ENCODE measurements at regions of chr9 and their contacts with region 1.

Region 1: GRCh38 chr9:33446946-33447798 is at the start of gene AQP3:
- DNase-seq: peak; percentile 76 to 84 (median 76)
- H3K4me3 ChIP-seq: peak within 1 kb of the TSS; percentile 68 to 73
- H3K4me3 Mint-ChIP-seq: peak within 1 kb of the TSS; percentile 92 to 98 (median 94)
- H3K27ac ChIP-seq: peak within 1 kb of the TSS; percentile 75
- H3K27ac Mint-ChIP-seq: peak within 1 kb of the TSS; percentile 94 to 98 (median 96)
- H3K4me1 ChIP-seq: peaks cover 65% of the 10 kb centered on the region
- H3K4me1 Mint-ChIP-seq: peaks cover 31 to 74% (median 48%) of the 10 kb centered on the region in 4 donors
- H3K27me3 ChIP-seq: no peaks in the 10 kb centered on the region
- H3K27me3 Mint-ChIP-seq: no peaks in the 10 kb centered on the region
- total RNA-seq, gene AQP3: 172 TPM

Region 2: GRCh38 chr9:33430942-33431341 is 16.2 kb before region 1 on chr9:
- CTCF ChIA-PET with region 1: interaction called, 22 read pairs
- POLR2A ChIA-PET with region 1: interaction called, 24 read pairs
- intact Hi-C with region 1: no loop called
- DNase-seq: no peak
- H3K4me3 ChIP-seq: no peak overlapping the region
- H3K4me3 Mint-ChIP-seq: no peak overlapping the region
- H3K27ac ChIP-seq: no peak overlapping the region
- H3K27ac Mint-ChIP-seq: peak overlapping the region in 1 of 7 donors; percentile 56
- H3K4me1 ChIP-seq: no peaks in the 10 kb centered on the region
- H3K4me1 Mint-ChIP-seq: peaks cover 5 to 23% (median 13%) of the 10 kb centered on the region in 4 donors
- H3K27me3 ChIP-seq: no peaks in the 10 kb centered on the region
- H3K27me3 Mint-ChIP-seq: no peaks in the 10 kb centered on the region

Region 3: DNA sequence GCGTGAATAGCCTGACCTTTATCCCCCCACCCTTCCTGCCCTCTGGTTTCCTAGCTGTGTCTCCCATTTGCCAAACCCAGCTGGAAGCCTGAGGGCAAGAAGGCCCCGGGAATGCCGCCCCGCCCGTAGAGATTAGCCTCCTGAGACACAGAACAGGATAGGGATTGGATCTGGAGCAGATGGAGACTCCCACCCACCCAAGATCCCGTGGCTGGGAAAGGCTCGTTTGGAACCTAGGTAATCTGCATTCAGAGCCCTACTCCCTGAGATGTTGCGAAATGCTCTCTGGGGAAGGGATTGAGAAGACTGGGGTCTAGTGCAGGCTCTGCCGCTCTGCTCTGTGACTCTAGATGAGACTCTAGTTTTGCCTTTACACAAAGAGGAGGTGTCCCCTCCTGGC is 10.7 kb before region 1 on chr9:
- CTCF ChIA-PET with region 1: interaction called, 22 read pairs
- POLR2A ChIA-PET with region 1: interaction called, 299 read pairs
- intact Hi-C with region 1: no loop called
- DNase-seq: no peak
- H3K4me3 ChIP-seq: no peak overlapping the region
- H3K4me3 Mint-ChIP-seq: no peak overlapping the region
- H3K27ac ChIP-seq: no peak overlapping the region
- H3K27ac Mint-ChIP-seq: peak overlapping the region in 4 of 7 donors; percentile 32 to 81 (median 41)
- H3K4me1 ChIP-seq: peaks cover 16% of the 10 kb centered on the region
- H3K4me1 Mint-ChIP-seq: peaks cover 18 to 55% (median 31%) of the 10 kb centered on the region in 4 donors
- H3K27me3 ChIP-seq: no peaks in the 10 kb centered on the region
- H3K27me3 Mint-ChIP-seq: no peaks in the 10 kb centered on the region

Region 4: DNA sequence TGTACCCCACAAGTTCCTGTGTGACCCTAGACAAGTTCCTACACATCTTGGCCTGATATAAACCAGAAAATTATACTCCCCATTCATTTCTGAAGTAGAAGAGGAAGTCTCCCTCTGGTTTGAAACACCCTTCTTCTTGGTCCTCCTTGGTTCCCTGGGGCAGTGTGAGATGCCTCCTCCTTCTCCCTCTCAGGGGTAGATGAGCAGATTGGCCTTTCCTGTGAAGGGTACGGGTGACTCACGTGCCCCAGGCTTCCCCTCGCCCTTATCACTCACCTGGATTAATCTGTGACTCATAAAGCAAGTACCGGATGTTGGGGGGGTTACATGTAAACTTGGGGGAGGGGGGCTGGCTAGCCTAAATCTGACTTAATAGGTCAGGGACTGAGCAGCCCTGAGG is 11.3 kb after region 1 on chr9:
- CTCF ChIA-PET with region 1: interaction called, 562 read pairs
- POLR2A ChIA-PET with region 1: interaction called, 299 read pairs
- intact Hi-C with region 1: loop called (anchors 1 kb)
- DNase-seq: peak; percentile 53 to 91 (median 56)
- H3K4me3 ChIP-seq: peak overlapping the region in 1 of 2 donors; percentile 4
- H3K4me3 Mint-ChIP-seq: peak overlapping the region in 7 of 8 donors; percentile 42 to 87 (median 63)
- H3K27ac ChIP-seq: peak overlapping the region; percentile 58
- H3K27ac Mint-ChIP-seq: peak overlapping the region; percentile 88 to 98 (median 94)
- H3K4me1 ChIP-seq: peaks cover 58% of the 10 kb centered on the region
- H3K4me1 Mint-ChIP-seq: peaks cover 36 to 64% (median 53%) of the 10 kb centered on the region in 4 donors
- H3K27me3 ChIP-seq: no peaks in the 10 kb centered on the region
- H3K27me3 Mint-ChIP-seq: no peaks in the 10 kb centered on the region

Region 5: DNA sequence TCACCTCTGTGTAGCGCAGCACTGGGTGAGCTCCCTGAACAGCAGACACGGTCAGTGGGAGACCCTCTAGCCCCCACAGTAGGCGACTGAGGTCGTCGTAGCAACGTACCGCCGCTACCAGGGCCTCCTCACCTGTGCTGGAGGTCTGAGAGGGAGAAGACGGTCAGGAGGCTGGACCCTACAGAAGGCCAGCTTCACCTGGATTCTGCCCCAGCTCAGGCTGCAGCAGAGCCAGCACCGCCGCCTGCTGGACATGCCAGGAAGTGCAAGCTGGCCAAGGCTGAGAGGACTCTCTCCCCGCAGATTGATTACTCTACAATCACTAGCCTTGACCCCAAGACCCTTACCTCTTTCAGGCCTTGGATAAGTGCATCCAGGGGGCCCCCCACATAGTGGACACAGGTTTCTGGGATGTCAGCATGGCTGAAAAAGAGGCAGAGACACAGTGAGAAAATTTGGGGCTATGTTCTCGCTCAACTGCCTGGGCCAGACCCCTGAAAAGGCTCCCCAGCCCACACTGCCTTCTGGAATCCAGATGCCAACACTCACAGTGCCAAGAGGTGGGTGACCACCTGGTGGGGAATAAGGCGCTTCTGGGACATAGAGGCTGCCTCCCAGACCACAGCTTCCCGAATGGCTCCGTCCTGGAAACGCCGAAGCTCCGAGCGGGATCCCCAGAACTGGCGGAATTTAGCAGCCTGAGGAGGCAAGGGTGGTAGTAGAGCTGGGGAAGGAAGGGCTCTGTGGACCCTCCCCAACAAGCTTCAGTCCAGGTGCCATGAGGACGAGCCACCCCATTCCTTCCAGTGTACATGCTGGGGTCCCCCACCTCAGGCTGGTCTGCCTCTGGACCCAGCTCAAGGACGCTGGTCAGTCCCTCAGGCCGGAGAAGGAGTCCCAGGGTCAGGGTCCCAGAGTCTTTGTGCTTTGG is 19.7 kb after region 1 on chr9:
- CTCF ChIA-PET with region 1: interaction called, 562 read pairs
- POLR2A ChIA-PET with region 1: interaction called, 299 read pairs
- intact Hi-C with region 1: loop called (anchors 1 kb)
- DNase-seq: peak; percentile 57 to 77 (median 61)
- H3K4me3 ChIP-seq: no peak overlapping the region
- H3K4me3 Mint-ChIP-seq: no peak overlapping the region
- H3K27ac ChIP-seq: no peak overlapping the region
- H3K27ac Mint-ChIP-seq: peak overlapping the region; percentile 13 to 83 (median 50)
- H3K4me1 ChIP-seq: peaks cover 6% of the 10 kb centered on the region
- H3K4me1 Mint-ChIP-seq: peaks cover 5 to 12% (median 7%) of the 10 kb centered on the region in 4 donors
- H3K27me3 ChIP-seq: no peaks in the 10 kb centered on the region
- H3K27me3 Mint-ChIP-seq: no peaks in the 10 kb centered on the region

Region 6: DNA sequence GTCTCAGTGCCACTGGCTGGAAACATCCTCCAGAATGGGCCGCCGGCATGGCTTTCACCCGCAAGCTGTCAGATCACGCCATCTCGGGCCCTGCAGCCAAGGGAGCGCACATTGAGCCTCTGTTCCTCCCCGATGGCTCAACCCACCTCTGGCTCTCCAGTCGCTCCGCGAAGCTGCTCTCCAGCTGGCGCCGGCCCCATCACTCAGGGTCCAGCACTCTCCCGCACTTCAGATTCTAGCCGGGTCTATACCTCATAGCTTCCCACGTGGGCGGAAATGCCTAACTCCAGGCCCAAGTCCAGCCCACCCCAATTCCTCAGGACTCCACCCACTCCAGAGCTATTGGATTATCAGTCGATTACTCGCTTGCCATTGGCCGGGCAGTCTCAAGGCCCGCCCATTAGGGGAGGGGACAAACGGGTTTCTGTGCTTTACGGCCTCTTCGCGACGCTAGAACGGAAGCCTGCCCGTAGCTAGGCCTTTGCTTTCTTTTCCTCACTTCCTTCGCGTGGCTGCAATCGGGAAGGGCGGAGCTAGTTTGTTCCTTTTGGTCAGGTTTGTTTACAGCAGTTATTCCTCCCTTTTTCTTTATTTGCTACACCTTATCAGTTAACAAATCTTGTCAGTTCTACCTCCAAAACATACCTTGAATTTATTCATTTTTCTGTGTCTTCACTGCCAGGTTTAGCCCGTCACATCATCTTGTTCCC is 26.6 kb after region 1 on chr9 and contains the start of gene NOL6:
- CTCF ChIA-PET with region 1: interaction called, 562 read pairs
- POLR2A ChIA-PET with region 1: interaction called, 59 read pairs
- intact Hi-C with region 1: loop called (anchors 1 kb)
- DNase-seq: peak; percentile 98 to 99 (median 98)
- H3K4me3 ChIP-seq: peak within 1 kb of the TSS; percentile 80 to 93
- H3K4me3 Mint-ChIP-seq: peak within 1 kb of the TSS; percentile 95 to 100 (median 99)
- H3K27ac ChIP-seq: peak within 1 kb of the TSS; percentile 62
- H3K27ac Mint-ChIP-seq: peak within 1 kb of the TSS; percentile 90 to 100 (median 97)
- H3K4me1 ChIP-seq: peaks cover 27% of the 10 kb centered on the region
- H3K4me1 Mint-ChIP-seq: peaks cover 11 to 36% (median 28%) of the 10 kb centered on the region in 4 donors
- H3K27me3 ChIP-seq: no peaks in the 10 kb centered on the region
- H3K27me3 Mint-ChIP-seq: no peaks in the 10 kb centered on the region
- total RNA-seq, gene NOL6: 39.1 to 41.1 TPM

Region 7: GRCh38 chr9:34098307-34098706 is 651.1 kb after region 1 on chr9:
- CTCF ChIA-PET with region 1: no interaction called
- POLR2A ChIA-PET with region 1: no interaction called
- intact Hi-C with region 1: no loop called
- DNase-seq: no peak
- H3K4me3 ChIP-seq: no peak overlapping the region
- H3K4me3 Mint-ChIP-seq: no peak overlapping the region
- H3K27ac ChIP-seq: no peak overlapping the region
- H3K27ac Mint-ChIP-seq: peak overlapping the region in 3 of 7 donors; percentile 21 to 68 (median 29)
- H3K4me1 ChIP-seq: no peaks in the 10 kb centered on the region
- H3K4me1 Mint-ChIP-seq: peaks cover 0 to 1% (median 0%) of the 10 kb centered on the region in 4 donors
- H3K27me3 ChIP-seq: no peaks in the 10 kb centered on the region
- H3K27me3 Mint-ChIP-seq: no peaks in the 10 kb centered on the region

Region 8: GRCh38 chr9:34158362-34158869 is 711.2 kb after region 1 on chr9:
- CTCF ChIA-PET with region 1: no interaction called
- POLR2A ChIA-PET with region 1: no interaction called
- intact Hi-C with region 1: no loop called
- DNase-seq: no peak
- H3K4me3 ChIP-seq: no peak overlapping the region
- H3K4me3 Mint-ChIP-seq: no peak overlapping the region
- H3K27ac ChIP-seq: no peak overlapping the region
- H3K27ac Mint-ChIP-seq: no peak overlapping the region
- H3K4me1 ChIP-seq: no peaks in the 10 kb centered on the region
- H3K4me1 Mint-ChIP-seq: no peaks in the 10 kb centered on the region
- H3K27me3 ChIP-seq: no peaks in the 10 kb centered on the region
- H3K27me3 Mint-ChIP-seq: peaks cover 0 to 1% of the 10 kb centered on the region in 2 donors

Measured in CD4-positive, alpha-beta memory T cell (primary cell).